Esophagus squamous epithelium (tissue), 5 donors: ENCODE measurements at regions of chr2 and their contacts with region 1.

Region 1: DNA sequence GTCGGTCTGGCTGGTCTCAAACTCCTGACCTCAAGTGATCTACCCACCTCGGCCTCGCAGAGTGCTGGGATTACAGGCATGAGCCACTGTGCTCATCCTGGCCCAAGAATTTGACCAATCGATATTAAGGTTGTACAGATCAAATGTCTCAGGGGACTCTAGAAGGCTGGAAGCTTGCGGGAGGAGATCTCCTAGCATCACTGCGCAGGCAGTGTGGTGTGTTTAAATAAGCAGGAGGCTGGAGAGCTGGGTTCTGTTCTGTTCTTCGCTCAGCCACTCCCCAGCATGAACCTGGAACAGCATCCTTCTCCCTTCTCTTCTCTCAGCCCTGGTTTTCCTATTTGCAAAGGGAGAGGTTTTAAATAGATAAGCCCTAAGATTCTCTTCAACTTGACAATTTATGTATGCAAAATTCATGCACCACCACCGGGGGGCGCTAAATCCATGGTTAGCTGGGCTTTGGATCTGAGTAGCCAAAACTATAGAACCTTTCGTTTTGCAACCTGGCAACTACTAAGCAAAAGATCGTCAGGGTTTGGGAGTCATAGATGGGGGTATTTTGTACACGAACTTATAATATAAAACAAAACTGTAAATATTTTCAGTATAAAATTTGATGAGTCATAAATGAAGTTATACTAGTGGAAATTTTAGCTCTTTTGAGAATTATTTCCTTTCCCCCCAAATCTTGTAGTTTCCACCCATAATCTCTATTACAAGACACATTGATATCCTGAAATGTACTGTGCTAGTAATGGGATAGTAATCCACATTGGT is 60.6 kb downstream of the SLC16A14 start:
- DNase-seq: peak; percentile 7
- H3K4me3 ChIP-seq: no peak overlapping the region
- H3K27ac ChIP-seq: no peak overlapping the region
- H3K4me1 ChIP-seq: peaks cover 0 to 6% (median 0%) of the 10 kb centered on the region in 3 donors
- H3K27me3 ChIP-seq: no peaks in the 10 kb centered on the region
- CTCF ChIP-seq: peak; percentile 78 to 89 (median 84)
- POLR2A ChIP-seq: no peak

Region 2: GRCh38 chr2:229910832-229911412 is 97.2 kb before region 1 on chr2:
- intact Hi-C with region 1: no loop called
- DNase-seq: no peak
- H3K4me3 ChIP-seq: no peak overlapping the region
- H3K27ac ChIP-seq: no peak overlapping the region
- H3K4me1 ChIP-seq: peaks cover 0 to 64% (median 0%) of the 10 kb centered on the region in 3 donors
- H3K27me3 ChIP-seq: no peaks in the 10 kb centered on the region
- CTCF ChIP-seq: peak in 2 of 6 experiments; percentile 8 to 16
- POLR2A ChIP-seq: no peak

Region 3: DNA sequence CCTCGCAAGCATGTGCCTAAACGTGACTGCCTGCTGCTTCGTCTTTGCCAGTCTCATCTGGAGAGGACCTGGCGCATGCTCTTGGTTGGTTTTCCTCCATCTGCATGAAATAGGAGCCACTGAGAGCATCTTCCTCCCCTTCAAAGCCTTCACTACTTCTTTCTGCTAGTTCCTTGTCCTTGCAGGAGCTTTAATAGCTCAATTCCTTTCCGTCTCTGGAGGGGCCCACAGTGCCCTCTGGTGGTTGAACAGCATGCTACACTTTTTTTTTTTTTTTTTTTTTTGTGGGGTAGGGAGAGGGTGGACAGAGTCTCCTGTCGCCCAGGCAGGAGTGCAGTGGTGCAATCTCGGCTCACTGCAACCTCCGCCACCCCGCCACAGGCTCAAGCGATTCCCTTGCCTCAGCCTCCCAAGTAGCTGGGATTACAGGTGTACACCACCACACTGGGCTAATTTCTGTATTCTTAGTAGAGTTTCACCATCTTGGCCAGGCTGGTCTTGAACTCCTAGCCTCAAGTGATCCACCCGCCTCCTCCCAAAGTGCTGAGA is 152.1 kb after region 1 on chr2:
- intact Hi-C with region 1: loop called (anchors 2 kb)
- DNase-seq: no peak
- H3K4me3 ChIP-seq: no peak overlapping the region
- H3K27ac ChIP-seq: no peak overlapping the region
- H3K4me1 ChIP-seq: peaks cover 0 to 5% (median 0%) of the 10 kb centered on the region in 3 donors
- H3K27me3 ChIP-seq: no peaks in the 10 kb centered on the region
- CTCF ChIP-seq: peak; percentile 55 to 85 (median 74)
- POLR2A ChIP-seq: no peak

Region 4: GRCh38 chr2:230230087-230230486 is 222.0 kb after region 1 on chr2:
- intact Hi-C with region 1: no loop called
- DNase-seq: no peak
- H3K4me3 ChIP-seq: no peak overlapping the region
- H3K27ac ChIP-seq: no peak overlapping the region
- H3K4me1 ChIP-seq: no peaks in the 10 kb centered on the region
- H3K27me3 ChIP-seq: no peaks in the 10 kb centered on the region
- CTCF ChIP-seq: no peak
- POLR2A ChIP-seq: no peak

Region 5: DNA sequence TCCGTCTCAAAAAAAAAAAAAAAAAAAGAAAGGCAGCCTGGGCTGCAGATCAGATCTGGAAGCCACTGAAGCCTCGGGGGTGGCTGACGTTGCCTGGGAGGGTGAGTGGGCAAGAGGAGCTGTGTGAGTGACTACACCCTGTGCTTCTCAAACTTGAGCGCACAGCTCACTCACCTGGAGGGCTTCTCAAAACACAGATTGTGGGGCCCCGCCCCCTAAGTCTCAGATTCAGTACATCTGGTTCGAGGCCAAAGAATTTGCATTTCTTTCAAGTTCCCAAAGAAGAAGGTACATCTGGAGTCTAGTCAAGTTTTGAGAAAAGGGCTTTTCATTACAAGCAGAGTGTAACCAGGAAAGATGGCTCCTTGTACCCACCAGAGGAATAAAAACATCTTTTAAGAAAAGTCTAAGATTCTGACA is 606.8 kb after region 1 on chr2:
- intact Hi-C with region 1: loop called (anchors 5 kb)
- DNase-seq: no peak
- H3K4me3 ChIP-seq: no peak overlapping the region
- H3K27ac ChIP-seq: no peak overlapping the region
- H3K4me1 ChIP-seq: peaks cover 0 to 18% (median 0%) of the 10 kb centered on the region in 3 donors
- H3K27me3 ChIP-seq: no peaks in the 10 kb centered on the region
- CTCF ChIP-seq: no peak
- POLR2A ChIP-seq: peak in 1 of 4 donors; percentile 29